PC-9 (cell line): ENCODE measurements at regions of chr21 and their contacts with region 1.

Region 1: GRCh38 chr21:17537299-17537698 is 24.5 kb downstream of the CXADR start:
- DNase-seq: peak; percentile 11 to 90
- H3K4me3 ChIP-seq: no peak overlapping the region
- H3K27ac ChIP-seq: peak overlapping the region; percentile 12; the same call in 1 of the 2 replicates
- H3K4me1 ChIP-seq: peaks cover 20% of the 10 kb centered on the region
- H3K27me3 ChIP-seq: no peaks in the 10 kb centered on the region
- CTCF ChIP-seq: no peak

Region 2: DNA sequence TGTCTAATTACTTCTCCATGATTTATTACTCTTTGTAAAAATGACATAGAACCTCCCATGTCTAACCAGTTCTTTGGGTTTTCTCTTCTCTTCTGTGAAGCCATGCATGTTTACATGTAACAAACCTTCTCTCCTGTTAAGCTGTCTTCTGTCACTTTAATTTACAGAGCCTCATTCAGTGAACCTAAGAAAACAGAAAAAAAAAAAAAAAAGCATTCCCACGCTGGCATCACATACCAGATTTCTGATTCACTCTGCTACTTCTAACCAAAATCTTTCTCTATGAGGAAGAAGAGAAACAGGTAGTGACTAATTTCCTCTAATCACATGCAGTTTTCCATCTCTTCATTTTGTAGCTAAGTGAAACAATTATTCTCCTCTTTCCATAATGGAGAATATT is 165.8 kb before region 1 on chr21:
- CTCF ChIA-PET with region 1: no interaction called
- POLR2A ChIA-PET with region 1: no interaction called
- intact Hi-C with region 1: no loop called
- DNase-seq: peak in 1 of 2 experiments; percentile 92
- H3K4me3 ChIP-seq: no peak overlapping the region
- H3K27ac ChIP-seq: peak overlapping the region; percentile 86
- H3K4me1 ChIP-seq: peaks cover 27% of the 10 kb centered on the region
- H3K27me3 ChIP-seq: no peaks in the 10 kb centered on the region
- CTCF ChIP-seq: no peak

Region 3: GRCh38 chr21:17501107-17502006 is 35.9 kb before region 1 on chr21:
- CTCF ChIA-PET with region 1: no interaction called
- POLR2A ChIA-PET with region 1: no interaction called
- intact Hi-C with region 1: loop called (anchors 1 kb)
- DNase-seq: peak; percentile 7 to 87
- H3K4me3 ChIP-seq: no peak overlapping the region
- H3K27ac ChIP-seq: no peak overlapping the region
- H3K4me1 ChIP-seq: peaks cover 40% of the 10 kb centered on the region
- H3K27me3 ChIP-seq: no peaks in the 10 kb centered on the region
- CTCF ChIP-seq: no peak

Region 4: GRCh38 chr21:17631195-17631594 is 93.9 kb after region 1 on chr21:
- CTCF ChIA-PET with region 1: no interaction called
- POLR2A ChIA-PET with region 1: interaction called, 20 read pairs
- intact Hi-C with region 1: no loop called
- DNase-seq: no peak
- H3K4me3 ChIP-seq: no peak overlapping the region
- H3K27ac ChIP-seq: no peak overlapping the region
- H3K4me1 ChIP-seq: no peaks in the 10 kb centered on the region
- H3K27me3 ChIP-seq: no peaks in the 10 kb centered on the region
- CTCF ChIP-seq: no peak